IMR-90 (cell line): ENCODE measurements at regions of chr13 and their contacts with region 1.

Region 1: GRCh38 chr13:30465585-30466357 is at the start of gene HMGB1:
- DNase-seq: peak; percentile 99
- ATAC-seq: peak; percentile 89
- H3K4me3 ChIP-seq: peak within 1 kb of the TSS; percentile 74
- H3K27ac ChIP-seq: peak within 1 kb of the TSS; percentile 87
- H3K4me1 ChIP-seq: peaks cover 3% of the 10 kb centered on the region
- H3K27me3 ChIP-seq: no peaks in the 10 kb centered on the region
- CTCF ChIP-seq: no peak
- POLR2A ChIP-seq: peak; percentile 93
- RAD21 ChIP-seq: no peak
- total RNA-seq, gene HMGB1: 276 and 480 TPM in 2 replicates

Region 2: GRCh38 chr13:30429721-30430694 is 35.8 kb before region 1 on chr13:
- CTCF ChIA-PET with region 1: interaction called, 10 read pairs
- POLR2A ChIA-PET with region 1: no interaction called
- dilution Hi-C with region 1: no loop called
- in situ Hi-C with region 1: no loop called
- intact Hi-C with region 1: no loop called
- DNase-seq: peak; percentile 95
- ATAC-seq: peak; percentile 93
- H3K4me3 ChIP-seq: no peak overlapping the region
- H3K27ac ChIP-seq: peak overlapping the region; percentile 62
- H3K4me1 ChIP-seq: peaks cover 3% of the 10 kb centered on the region
- H3K27me3 ChIP-seq: no peaks in the 10 kb centered on the region
- CTCF ChIP-seq: no peak
- POLR2A ChIP-seq: no peak
- RAD21 ChIP-seq: no peak

Region 3: DNA sequence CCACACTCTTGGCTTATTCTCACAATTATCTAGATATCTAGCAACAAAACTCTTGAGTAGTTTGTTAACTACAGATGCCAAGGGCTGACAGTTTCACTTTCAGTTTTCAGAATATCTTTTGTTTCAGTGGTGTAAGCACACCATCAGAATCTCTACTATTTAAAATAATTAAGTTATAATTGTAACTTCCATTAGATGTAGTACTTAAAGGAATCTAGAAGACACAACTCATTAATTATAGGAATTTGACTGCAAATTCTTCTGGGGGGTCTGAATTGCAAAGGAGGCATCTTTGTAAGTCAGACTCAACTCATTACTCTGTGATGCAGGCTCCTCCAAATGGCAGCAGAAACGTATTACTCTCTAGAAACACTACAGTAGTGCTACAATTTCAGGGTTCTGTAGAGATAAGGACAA is 107.1 kb after region 1 on chr13:
- CTCF ChIA-PET with region 1: no interaction called
- POLR2A ChIA-PET with region 1: no interaction called
- dilution Hi-C with region 1: no loop called
- in situ Hi-C with region 1: no loop called
- intact Hi-C with region 1: loop called (anchors 2 kb)
- DNase-seq: peak; percentile 57
- ATAC-seq: peak; percentile 58
- H3K4me3 ChIP-seq: peak overlapping the region; percentile 48; the same call in 1 of the 2 replicates
- H3K27ac ChIP-seq: peak overlapping the region; percentile 51; the same call in 1 of the 2 replicates
- H3K4me1 ChIP-seq: peaks cover 10% of the 10 kb centered on the region
- H3K27me3 ChIP-seq: no peaks in the 10 kb centered on the region
- CTCF ChIP-seq: peak; percentile 49
- POLR2A ChIP-seq: no peak
- RAD21 ChIP-seq: peak; percentile 52

Region 4: GRCh38 chr13:30991922-30992321 is 526.2 kb after region 1 on chr13:
- CTCF ChIA-PET with region 1: no interaction called
- POLR2A ChIA-PET with region 1: no interaction called
- dilution Hi-C with region 1: no loop called
- in situ Hi-C with region 1: no loop called
- intact Hi-C with region 1: no loop called
- DNase-seq: no peak
- ATAC-seq: no peak
- H3K4me3 ChIP-seq: no peak overlapping the region
- H3K27ac ChIP-seq: no peak overlapping the region
- H3K4me1 ChIP-seq: no peaks in the 10 kb centered on the region
- H3K27me3 ChIP-seq: peaks cover 9% of the 10 kb centered on the region
- CTCF ChIP-seq: no peak
- POLR2A ChIP-seq: no peak
- RAD21 ChIP-seq: no peak